Activated B cell treated with CpG ODN at 0.5 μM for 24 hours (primary cell): ENCODE measurements at regions of chr4 and their contacts with region 1.

Region 1: DNA sequence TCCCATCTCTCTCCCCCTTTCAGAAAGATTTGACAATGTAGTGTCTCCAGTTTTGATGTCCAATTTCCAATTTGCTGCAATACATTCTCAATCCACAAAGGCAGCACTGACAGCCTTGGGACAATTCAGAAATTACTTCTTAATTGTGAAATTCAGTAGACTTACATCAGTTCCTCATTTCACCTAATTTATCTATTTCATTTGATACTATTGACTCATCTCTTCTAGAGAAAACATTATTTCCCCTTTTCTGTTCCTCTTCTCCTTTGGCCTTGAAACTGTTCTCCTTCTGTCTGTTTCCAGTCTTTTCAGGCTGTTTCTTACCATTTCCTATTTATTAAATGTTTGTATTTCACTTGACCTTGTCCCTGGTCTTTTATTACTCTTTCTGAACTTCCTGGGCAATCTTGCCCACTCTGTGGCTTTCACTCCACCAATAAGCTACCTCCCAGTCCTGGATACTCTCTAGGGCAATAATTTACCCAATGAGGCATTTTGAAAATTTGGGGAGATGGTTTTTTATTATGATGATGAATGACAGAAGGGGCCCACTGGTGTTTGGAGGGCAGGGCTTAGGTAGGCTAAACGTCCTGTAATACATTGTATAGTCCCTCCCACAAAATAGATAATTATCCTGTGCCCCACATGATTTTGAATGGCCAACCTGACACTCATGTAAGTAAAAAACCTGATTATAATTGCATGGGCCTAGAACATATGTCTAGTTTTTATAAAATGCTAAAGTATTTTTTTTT is 498.0 kb upstream of the BOD1L1 start:
- DNase-seq: no peak
- ATAC-seq: peak; percentile 90
- H3K4me3 Mint-ChIP-seq: peak overlapping the region; percentile 59
- H3K27ac Mint-ChIP-seq: peak overlapping the region; percentile 84
- H3K4me1 Mint-ChIP-seq: peaks cover 27% of the 10 kb centered on the region
- H3K27me3 Mint-ChIP-seq: no peaks in the 10 kb centered on the region
- CTCF ChIP-seq: no peak

Region 2: GRCh38 chr4:13601048-13601447 is 524.5 kb before region 1 on chr4:
- CTCF ChIA-PET with region 1: no interaction called
- POLR2A ChIA-PET with region 1: no interaction called
- intact Hi-C with region 1: loop called (anchors 5 kb)
- DNase-seq: no peak
- ATAC-seq: peak; percentile 96
- H3K4me3 Mint-ChIP-seq: peak overlapping the region; percentile 48
- H3K27ac Mint-ChIP-seq: peak overlapping the region; percentile 76
- H3K4me1 Mint-ChIP-seq: peaks cover 34% of the 10 kb centered on the region
- H3K27me3 Mint-ChIP-seq: no peaks in the 10 kb centered on the region
- CTCF ChIP-seq: no peak

Region 3: DNA sequence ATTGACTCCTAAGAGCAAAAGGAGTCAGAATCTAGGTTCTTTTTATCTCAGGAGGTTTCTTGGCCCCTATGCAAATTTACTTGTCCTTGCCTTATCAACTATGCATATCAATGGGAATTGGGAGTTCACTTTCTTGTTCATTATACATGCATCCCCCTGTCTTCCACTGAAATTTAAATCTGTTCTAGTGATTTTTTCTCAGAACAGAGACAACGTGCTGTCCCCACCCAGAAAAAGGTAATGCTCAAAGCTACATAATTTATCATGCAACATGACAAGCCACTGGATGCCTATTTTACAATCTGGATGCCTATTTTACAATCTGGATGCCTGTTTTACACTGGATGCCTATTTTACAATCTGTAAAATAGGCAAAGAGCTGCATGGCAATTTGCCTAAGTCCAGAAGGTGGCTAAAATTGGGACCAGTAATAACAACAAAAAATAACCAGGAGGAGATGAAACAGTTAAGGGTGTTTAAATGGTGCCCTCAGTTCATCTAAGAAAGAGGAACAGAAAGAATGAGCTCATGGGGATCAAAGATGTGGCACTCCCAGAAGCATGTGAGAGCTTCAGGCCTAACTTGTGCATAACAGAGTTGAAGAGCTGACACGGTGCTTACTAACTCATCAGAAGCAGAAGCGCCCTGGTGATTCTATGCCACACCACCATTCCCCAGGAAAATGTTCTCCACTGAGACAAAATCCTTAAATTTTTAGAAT is 39.8 kb after region 1 on chr4:
- CTCF ChIA-PET with region 1: interaction called, 3 read pairs
- POLR2A ChIA-PET with region 1: no interaction called
- intact Hi-C with region 1: loop called (anchors 1 kb)
- DNase-seq: no peak
- ATAC-seq: peak; percentile 99
- H3K4me3 Mint-ChIP-seq: peak overlapping the region; percentile 69
- H3K27ac Mint-ChIP-seq: peak overlapping the region; percentile 86
- H3K4me1 Mint-ChIP-seq: peaks cover 31% of the 10 kb centered on the region
- H3K27me3 Mint-ChIP-seq: no peaks in the 10 kb centered on the region
- CTCF ChIP-seq: no peak

Region 4: GRCh38 chr4:14178421-14178820 is 52.9 kb after region 1 on chr4:
- CTCF ChIA-PET with region 1: no interaction called
- POLR2A ChIA-PET with region 1: interaction called, 4 read pairs
- intact Hi-C with region 1: loop called (anchors 1 kb)
- DNase-seq: no peak
- ATAC-seq: peak; percentile 62
- H3K4me3 Mint-ChIP-seq: peak overlapping the region; percentile 67
- H3K27ac Mint-ChIP-seq: peak overlapping the region; percentile 89
- H3K4me1 Mint-ChIP-seq: peaks cover 85% of the 10 kb centered on the region
- H3K27me3 Mint-ChIP-seq: no peaks in the 10 kb centered on the region
- CTCF ChIP-seq: no peak

Region 5: GRCh38 chr4:14254252-14254651 is 128.7 kb after region 1 on chr4:
- CTCF ChIA-PET with region 1: no interaction called
- POLR2A ChIA-PET with region 1: no interaction called
- intact Hi-C with region 1: loop called (anchors 5 kb)
- DNase-seq: peak; percentile 23
- ATAC-seq: peak; percentile 62
- H3K4me3 Mint-ChIP-seq: no peak overlapping the region
- H3K27ac Mint-ChIP-seq: no peak overlapping the region
- H3K4me1 Mint-ChIP-seq: no peaks in the 10 kb centered on the region
- H3K27me3 Mint-ChIP-seq: no peaks in the 10 kb centered on the region
- CTCF ChIP-seq: no peak